OCI-LY7 (cell line): ENCODE measurements at regions of chr4 and their contacts with region 1.

Region 1: GRCh38 chr4:37891260-37892159 is 626 bp downstream of the TBC1D1 start:
- DNase-seq: peak; percentile 78
- H3K4me3 ChIP-seq: peak overlapping the region; percentile 76
- H3K27ac ChIP-seq: peak overlapping the region; percentile 78
- H3K4me1 ChIP-seq: peaks cover 33% of the 10 kb centered on the region
- CTCF ChIP-seq: peak; percentile 37; the same call in 1 of the 2 replicates

Region 2: DNA sequence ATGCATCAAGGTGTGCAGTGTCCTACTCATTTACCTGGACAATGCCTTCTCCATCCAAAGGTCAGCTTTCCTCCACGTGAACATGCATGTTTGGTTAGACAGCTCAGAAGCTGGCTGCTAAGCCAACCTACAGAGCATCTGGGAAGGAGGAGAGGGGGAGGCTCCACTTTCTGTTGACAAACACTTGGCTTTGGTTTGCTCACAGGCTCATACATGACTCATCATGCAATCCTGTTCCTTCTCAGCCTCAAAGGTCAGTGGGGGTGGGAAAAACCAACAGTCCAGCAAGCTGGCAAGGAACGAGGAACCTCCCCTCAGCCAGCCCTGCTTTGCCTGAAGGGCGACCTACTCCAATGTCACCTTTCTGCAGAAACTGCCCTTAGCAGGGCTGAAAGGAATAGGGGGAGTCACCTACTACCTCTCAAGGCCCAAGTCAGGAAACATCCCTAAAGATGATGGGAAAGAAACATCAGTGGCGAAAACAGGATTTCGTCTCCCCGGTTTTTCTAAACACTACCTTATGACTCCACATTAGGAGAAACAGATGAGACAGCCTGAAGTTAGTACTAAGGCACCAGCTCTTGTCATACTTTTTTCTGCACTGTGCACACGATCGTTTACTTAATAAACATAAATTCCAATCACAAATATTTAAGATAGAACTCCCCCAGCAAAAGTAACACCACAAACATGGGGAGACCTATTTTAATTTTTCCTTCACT is 243.3 kb before region 1 on chr4:
- CTCF ChIA-PET with region 1: no interaction called
- POLR2A ChIA-PET with region 1: no interaction called
- intact Hi-C with region 1: no loop called
- DNase-seq: no peak
- H3K4me3 ChIP-seq: no peak overlapping the region
- H3K27ac ChIP-seq: no peak overlapping the region
- H3K4me1 ChIP-seq: peaks cover 27% of the 10 kb centered on the region
- CTCF ChIP-seq: no peak

Region 3: DNA sequence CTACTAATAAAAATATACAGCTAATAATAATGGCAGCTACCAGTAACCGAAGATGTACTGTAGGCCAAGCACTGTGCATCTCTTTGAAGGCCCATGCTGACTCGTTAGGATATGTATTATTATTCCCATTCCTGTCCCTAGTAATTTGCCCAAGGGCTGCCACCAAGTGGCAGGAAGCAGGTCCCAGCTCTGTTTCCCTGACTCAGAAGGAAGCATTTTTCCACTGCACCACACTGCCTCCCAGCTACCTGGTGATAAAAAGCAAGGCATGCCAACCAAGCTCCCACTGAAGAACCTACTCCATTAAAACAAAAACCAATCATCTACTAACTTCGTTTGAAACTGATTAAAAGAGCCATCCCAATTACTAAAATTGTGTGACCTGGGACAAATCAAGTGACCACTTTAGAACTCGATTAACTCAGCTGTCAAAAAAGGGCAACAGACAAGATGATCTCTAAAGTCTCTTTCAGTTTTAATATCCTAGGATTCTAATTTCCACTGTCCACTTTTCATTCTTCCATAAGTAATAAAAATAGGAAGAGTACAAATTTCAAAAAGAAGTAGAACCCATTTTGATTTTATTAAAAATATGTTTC is 89.3 kb before region 1 on chr4:
- CTCF ChIA-PET with region 1: no interaction called
- POLR2A ChIA-PET with region 1: interaction called, 6 read pairs
- intact Hi-C with region 1: loop called (anchors 1 kb)
- DNase-seq: peak; percentile 61
- H3K4me3 ChIP-seq: no peak overlapping the region
- H3K27ac ChIP-seq: no peak overlapping the region
- H3K4me1 ChIP-seq: peaks cover 24% of the 10 kb centered on the region
- CTCF ChIP-seq: peak; percentile 73

Region 4: DNA sequence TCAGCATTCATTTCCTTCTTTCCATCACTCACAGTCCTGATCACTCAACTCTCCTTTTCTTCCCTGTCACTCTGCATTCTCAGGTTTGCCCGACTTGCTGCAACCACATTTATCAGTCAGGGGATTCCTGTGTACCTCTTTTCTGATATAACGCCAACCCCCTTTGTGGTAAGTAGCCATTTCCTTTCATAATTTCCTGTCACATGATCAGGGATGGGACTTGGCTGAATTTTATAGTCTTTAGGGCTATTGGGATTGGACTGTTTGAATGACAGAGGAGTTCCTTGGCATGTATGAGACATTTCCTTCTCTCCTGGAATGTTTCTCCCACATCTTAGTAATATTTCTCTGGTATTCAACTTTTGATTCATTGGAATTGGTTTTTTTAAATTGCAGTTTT is 54.1 kb before region 1 on chr4:
- CTCF ChIA-PET with region 1: no interaction called
- POLR2A ChIA-PET with region 1: interaction called, 14 read pairs
- intact Hi-C with region 1: no loop called
- DNase-seq: peak; percentile 35
- H3K4me3 ChIP-seq: peak overlapping the region; percentile 7
- H3K27ac ChIP-seq: peak overlapping the region; percentile 46
- H3K4me1 ChIP-seq: peaks cover 17% of the 10 kb centered on the region
- CTCF ChIP-seq: no peak

Region 5: GRCh38 chr4:37908488-37909331 is 17.2 kb after region 1 on chr4:
- CTCF ChIA-PET with region 1: no interaction called
- POLR2A ChIA-PET with region 1: interaction called, 13 read pairs
- intact Hi-C with region 1: no loop called
- DNase-seq: no peak
- H3K4me3 ChIP-seq: no peak overlapping the region
- H3K27ac ChIP-seq: no peak overlapping the region
- H3K4me1 ChIP-seq: no peaks in the 10 kb centered on the region
- CTCF ChIP-seq: no peak

Region 6: GRCh38 chr4:38034986-38035882 is 143.7 kb after region 1 on chr4:
- CTCF ChIA-PET with region 1: no interaction called
- POLR2A ChIA-PET with region 1: interaction called, 4 read pairs
- intact Hi-C with region 1: loop called (anchors 2 kb)
- DNase-seq: peak; percentile 84
- H3K4me3 ChIP-seq: no peak overlapping the region
- H3K27ac ChIP-seq: peak overlapping the region; percentile 19
- H3K4me1 ChIP-seq: peaks cover 14% of the 10 kb centered on the region
- CTCF ChIP-seq: peak; percentile 97